ENCODE measurements at regions of chr16 and their contacts with region 1.

Region 1: DNA sequence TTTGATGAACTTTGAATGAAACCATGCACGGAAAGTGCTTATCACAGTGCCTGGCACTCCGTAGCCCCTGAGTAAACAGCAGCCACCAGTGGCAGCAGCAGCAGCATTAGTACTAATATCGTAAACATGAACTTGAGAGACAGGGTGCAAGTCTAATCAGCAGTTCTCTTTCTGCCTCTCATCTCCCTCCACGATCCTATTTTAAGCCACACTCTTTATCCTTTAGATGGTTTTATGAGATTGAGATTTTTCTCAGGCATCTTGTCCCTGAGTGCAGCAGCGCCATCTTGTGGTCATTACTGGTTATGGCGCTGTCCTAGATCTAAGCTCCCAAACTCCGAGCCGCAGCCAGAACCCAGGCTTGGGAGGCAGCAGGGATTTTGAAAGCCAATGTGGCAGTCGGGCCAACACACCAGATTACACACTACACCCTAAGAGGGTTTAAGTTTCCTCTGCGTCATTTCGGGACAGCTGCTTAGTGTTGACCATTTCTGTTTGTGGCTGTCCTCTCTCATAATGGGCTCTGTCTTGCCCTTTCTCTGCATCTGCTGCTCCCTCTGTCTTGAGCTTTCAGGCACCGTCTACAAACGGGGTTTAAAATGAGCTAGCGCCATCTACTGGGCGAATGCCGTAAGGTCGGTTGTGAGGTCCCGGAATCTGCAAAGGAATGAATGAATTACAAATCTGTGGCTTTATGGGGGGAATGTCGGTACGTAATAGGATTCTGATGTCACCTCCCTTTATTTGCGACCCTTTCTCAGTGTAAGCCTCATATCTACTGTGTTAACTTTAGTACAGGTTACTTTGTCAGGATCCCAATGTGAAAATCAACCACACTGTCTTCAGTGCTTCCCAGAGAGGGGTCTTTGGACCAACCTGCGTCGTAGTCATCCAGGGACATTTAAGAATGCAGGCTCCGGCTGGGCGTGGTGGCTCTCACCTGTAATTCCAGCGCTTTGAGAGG is 64.5 kb downstream of the CYLD start:
- DNase-seq: peak; percentile 76
- H3K4me3 ChIP-seq: peak overlapping the region; percentile 42 to 61
- H3K27ac ChIP-seq: no peak overlapping the region; a peak in 1 of 4 replicates
- H3K4me1 ChIP-seq: peaks cover 0 to 3% of the 10 kb centered on the region in 2 experiments; a peak in 1 of 4 replicates
- H3K27me3 ChIP-seq: no peaks in the 10 kb centered on the region
- CTCF ChIP-seq: peak; percentile 96
- EP300 ChIP-seq: no peak
- RAD21 ChIP-seq: peak; percentile 77

Region 2: DNA sequence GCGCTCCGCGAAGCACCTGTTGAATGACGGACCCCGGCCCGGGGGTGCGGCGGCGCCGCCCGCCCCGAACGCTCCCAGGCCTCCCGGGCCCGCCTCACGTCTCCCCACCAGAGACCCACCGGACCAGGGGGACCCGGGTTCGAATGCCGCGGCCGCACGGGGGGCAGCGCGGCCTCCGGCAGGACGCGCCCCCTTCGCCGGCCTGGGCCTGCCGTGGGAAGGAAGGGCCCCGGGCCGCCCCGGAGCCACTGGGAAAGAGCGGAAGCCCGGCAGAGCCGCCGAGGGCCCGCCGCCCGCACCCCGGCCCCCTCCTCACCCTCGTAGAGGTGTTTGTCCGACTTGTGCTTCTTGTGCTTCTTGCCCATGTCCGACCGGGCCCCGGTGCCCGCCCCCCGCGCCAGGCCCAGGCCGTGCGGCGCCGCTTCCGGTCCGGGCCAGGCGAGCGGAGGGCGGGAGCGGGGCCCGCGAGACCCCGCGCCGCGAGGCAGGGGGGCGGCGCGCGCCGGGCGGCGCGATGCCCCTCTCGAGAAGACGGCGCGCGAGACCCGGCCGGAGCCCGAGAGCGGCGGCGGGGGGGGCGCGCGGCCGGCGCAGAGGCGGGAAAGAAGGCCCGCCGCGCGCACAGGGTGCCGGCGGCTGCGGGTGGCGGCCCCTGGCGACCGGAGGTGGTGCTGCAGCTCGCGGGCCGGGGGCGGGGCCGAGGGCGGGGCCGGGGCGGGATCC is 437.8 kb before region 1 on chr16 and contains the start of gene BRD7:
- CTCF ChIA-PET with region 1: interaction called, 23 read pairs
- POLR2A ChIA-PET with region 1: no interaction called
- DNase-seq: peak; percentile 97
- H3K4me3 ChIP-seq: peak within 1 kb of the TSS; percentile 79 to 91
- H3K27ac ChIP-seq: peak within 1 kb of the TSS; percentile 39 to 72; a peak in 3 of 4 replicates
- H3K4me1 ChIP-seq: peaks cover 0 to 28% of the 10 kb centered on the region in 2 experiments; a peak in 2 of 4 replicates
- H3K27me3 ChIP-seq: no peaks in the 10 kb centered on the region
- CTCF ChIP-seq: no peak
- EP300 ChIP-seq: no peak
- RAD21 ChIP-seq: no peak
- polyA plus RNA-seq, gene BRD7: 31.6 and 32.9 TPM in 2 replicates

Region 3: DNA sequence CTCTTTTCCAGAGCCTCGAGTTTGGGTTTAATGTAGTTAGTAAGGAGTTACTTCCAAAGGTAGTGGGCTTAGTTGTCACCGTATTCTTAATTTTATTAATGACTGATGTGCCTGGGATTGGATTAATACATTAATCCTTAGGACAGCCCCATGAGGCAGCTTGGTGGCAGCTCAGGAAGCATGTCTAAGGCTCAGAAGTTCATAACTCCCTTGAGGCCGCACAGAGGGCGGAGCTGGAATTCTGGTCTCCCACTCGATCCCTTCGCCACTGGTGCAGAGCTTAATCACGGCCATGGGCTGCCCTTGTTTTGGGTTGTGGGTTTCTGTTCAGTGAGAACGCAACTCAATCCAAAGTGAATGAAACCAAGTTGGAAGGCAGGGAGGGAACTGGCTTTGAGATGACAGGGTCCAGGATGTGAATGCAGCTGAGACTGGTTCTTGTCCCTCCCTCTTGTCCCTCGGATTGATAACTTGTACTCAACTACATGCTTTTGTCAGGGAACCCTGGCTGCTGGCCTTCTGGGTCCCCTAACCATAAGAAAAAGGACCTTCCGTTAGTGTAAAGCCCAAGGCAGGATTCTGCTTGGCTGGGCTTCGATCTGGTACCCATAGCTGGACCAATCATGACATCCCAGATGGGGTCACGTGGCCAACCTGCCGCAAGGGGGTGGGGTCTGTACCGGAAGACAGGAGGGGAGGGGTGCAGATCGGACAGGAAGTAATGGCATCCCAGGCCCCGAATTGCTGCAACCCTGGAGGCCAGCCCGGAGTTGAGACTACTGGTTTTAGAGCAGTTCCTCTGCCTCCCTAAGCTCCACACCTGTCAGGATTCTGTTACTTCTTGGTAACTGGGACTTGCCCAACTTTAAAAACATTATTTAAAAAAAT is 170.6 kb before region 1 on chr16:
- CTCF ChIA-PET with region 1: no interaction called
- POLR2A ChIA-PET with region 1: no interaction called
- DNase-seq: peak; percentile 53
- H3K4me3 ChIP-seq: no peak overlapping the region
- H3K27ac ChIP-seq: no peak overlapping the region
- H3K4me1 ChIP-seq: no peaks in the 10 kb centered on the region; a peak in 1 of 4 replicates
- H3K27me3 ChIP-seq: no peaks in the 10 kb centered on the region
- CTCF ChIP-seq: no peak
- EP300 ChIP-seq: no peak
- RAD21 ChIP-seq: no peak

Region 4: DNA sequence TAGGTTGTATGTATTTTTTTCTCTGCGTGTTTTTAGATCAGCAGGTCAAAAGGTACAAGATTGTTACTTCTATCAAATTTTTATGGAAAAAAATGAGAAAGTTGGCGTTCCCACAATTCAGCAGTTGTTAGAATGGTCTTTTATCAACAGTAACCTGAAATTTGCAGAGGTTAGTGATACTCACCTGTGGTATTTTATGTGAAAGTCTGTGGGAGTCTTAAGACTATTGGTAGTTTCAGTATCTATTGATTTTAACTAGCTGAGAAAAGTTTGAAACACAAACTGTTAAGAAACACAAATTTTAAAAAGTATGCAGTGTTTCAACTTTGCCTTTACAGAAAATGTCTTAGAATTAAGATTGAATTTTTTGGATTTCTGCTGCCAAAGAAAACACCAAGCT is 14.9 kb before region 1 on chr16:
- CTCF ChIA-PET with region 1: interaction called, 56 read pairs
- POLR2A ChIA-PET with region 1: no interaction called
- DNase-seq: no peak
- H3K4me3 ChIP-seq: no peak overlapping the region
- H3K27ac ChIP-seq: no peak overlapping the region
- H3K4me1 ChIP-seq: no peaks in the 10 kb centered on the region
- H3K27me3 ChIP-seq: no peaks in the 10 kb centered on the region
- CTCF ChIP-seq: no peak
- EP300 ChIP-seq: no peak
- RAD21 ChIP-seq: no peak

Region 5: DNA sequence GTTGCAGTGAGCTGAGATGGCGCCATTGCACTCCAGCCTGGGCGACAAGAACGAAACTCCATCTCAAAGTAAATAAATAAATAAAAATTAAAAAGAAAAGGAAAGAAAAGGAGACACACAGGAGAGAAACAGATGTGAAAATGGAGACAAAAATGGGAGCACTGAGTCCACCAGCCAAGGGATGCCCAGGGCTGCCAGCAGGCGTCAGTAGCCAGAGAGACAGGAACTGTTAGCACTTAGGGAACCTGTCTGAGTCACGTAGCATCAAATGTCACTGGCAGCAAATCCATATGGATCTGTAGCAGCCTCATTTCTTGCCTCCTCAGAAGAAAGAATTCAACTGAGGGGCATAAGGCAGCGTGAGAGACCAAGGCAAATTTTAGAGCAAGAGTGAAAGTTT is 15.2 kb after region 1 on chr16:
- CTCF ChIA-PET with region 1: interaction called, 51 read pairs
- POLR2A ChIA-PET with region 1: no interaction called
- DNase-seq: no peak
- H3K4me3 ChIP-seq: no peak overlapping the region
- H3K27ac ChIP-seq: no peak overlapping the region
- H3K4me1 ChIP-seq: no peaks in the 10 kb centered on the region
- H3K27me3 ChIP-seq: no peaks in the 10 kb centered on the region; the same call in 1 of the 2 replicates
- CTCF ChIP-seq: peak; percentile 32; the same call in 1 of the 2 replicates
- EP300 ChIP-seq: no peak
- RAD21 ChIP-seq: no peak

Region 6: GRCh38 chr16:50836121-50836621 is 29.8 kb after region 1 on chr16:
- CTCF ChIA-PET with region 1: interaction called, 27 read pairs
- POLR2A ChIA-PET with region 1: no interaction called
- DNase-seq: no peak
- H3K4me3 ChIP-seq: no peak overlapping the region
- H3K27ac ChIP-seq: no peak overlapping the region
- H3K4me1 ChIP-seq: no peaks in the 10 kb centered on the region
- H3K27me3 ChIP-seq: no peaks in the 10 kb centered on the region
- CTCF ChIP-seq: no peak
- EP300 ChIP-seq: no peak
- RAD21 ChIP-seq: no peak

Region 7: GRCh38 chr16:50889276-50889675 is 82.9 kb after region 1 on chr16:
- CTCF ChIA-PET with region 1: no interaction called
- POLR2A ChIA-PET with region 1: no interaction called
- DNase-seq: no peak
- H3K4me3 ChIP-seq: no peak overlapping the region
- H3K27ac ChIP-seq: no peak overlapping the region
- H3K4me1 ChIP-seq: no peaks in the 10 kb centered on the region
- H3K27me3 ChIP-seq: no peaks in the 10 kb centered on the region
- CTCF ChIP-seq: no peak
- EP300 ChIP-seq: no peak
- RAD21 ChIP-seq: no peak

Region 8: DNA sequence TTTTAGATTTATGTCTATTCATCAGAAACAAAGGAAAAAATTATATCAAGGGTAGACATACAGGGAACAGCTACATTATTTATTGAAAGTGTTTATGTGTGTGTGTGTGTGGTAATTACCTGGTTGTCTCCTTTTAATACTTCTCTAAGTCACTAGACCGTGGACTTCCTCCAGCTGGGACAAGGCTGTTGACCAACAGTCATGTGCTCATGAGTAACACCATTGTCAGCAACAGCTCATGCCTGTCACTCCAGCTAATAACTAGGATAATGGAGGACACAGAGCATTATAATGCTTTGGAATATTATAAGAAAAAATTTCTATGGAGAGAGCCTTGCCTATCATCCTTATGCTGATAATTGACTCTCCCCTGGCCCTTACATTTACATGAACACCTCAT is 470.0 kb after region 1 on chr16:
- CTCF ChIA-PET with region 1: no interaction called
- POLR2A ChIA-PET with region 1: no interaction called
- DNase-seq: no peak
- H3K4me3 ChIP-seq: no peak overlapping the region
- H3K27ac ChIP-seq: no peak overlapping the region
- H3K4me1 ChIP-seq: no peaks in the 10 kb centered on the region
- H3K27me3 ChIP-seq: no peaks in the 10 kb centered on the region
- CTCF ChIP-seq: no peak
- EP300 ChIP-seq: no peak
- RAD21 ChIP-seq: no peak

Region 9: DNA sequence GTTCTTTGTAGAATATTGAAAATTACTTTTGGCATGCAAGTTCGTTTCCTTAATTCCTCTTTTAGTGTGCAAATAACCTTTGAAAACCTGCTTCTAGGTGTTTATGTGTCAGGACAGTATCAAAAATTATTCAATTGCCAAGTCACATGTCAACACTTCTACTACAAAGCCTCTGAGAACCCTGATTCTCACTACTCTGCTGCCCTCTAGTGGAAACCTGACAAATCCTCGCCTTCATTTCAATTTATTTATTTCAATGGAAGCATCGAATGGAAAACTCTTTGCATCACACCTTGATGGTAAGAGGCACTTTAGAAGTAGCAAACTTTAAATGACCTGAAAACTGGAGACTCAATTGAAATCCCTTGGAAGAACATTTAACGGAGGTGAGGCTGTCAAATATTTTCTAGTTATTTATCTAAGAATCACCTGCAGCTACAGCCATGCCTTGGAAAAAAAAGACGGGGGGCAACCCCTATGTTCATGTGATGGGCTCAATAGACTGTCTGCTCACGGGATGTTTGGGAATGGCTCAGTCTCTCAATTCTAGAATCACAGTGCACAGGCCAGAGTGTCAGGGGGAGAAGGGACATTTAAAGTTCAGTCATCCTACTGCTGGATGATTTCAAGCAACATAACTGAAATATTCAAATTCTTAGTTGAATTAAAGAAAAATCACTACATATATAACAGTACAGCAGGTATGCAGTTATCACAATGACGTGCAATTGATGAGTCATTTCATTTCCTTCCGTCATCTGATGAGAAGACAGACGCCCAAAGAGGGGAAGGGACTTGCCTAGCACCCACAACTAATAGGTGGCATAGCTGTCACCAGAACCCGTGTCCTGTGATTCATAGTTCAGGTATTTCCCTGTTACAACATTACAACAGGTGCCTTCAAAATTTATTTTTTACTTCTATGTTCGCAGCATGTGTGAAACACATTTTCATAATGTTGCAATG is 1176.6 kb after region 1 on chr16:
- CTCF ChIA-PET with region 1: interaction called, 10 read pairs
- POLR2A ChIA-PET with region 1: no interaction called
- DNase-seq: peak; percentile 48
- H3K4me3 ChIP-seq: peak overlapping the region in 1 of 2 experiments; percentile 11; a peak in 1 of 4 replicates
- H3K27ac ChIP-seq: no peak overlapping the region
- H3K4me1 ChIP-seq: no peaks in the 10 kb centered on the region; a peak in 1 of 4 replicates
- H3K27me3 ChIP-seq: no peaks in the 10 kb centered on the region
- CTCF ChIP-seq: peak; percentile 78
- EP300 ChIP-seq: no peak
- RAD21 ChIP-seq: peak; percentile 97